Prostate gland (tissue), 2 donors: ENCODE measurements at regions of chr7 and their contacts with region 1.

Region 1: GRCh38 chr7:40329601-40330153 is 194.9 kb downstream of the SUGCT start:
- DNase-seq: no peak
- H3K4me3 ChIP-seq: no peak overlapping the region
- H3K27ac ChIP-seq: no peak overlapping the region
- H3K4me1 ChIP-seq: no peaks in the 10 kb centered on the region
- H3K27me3 ChIP-seq: no peaks in the 10 kb centered on the region
- CTCF ChIP-seq: peak; percentile 45 to 73 (median 66)
- POLR2A ChIP-seq: no peak

Region 2: DNA sequence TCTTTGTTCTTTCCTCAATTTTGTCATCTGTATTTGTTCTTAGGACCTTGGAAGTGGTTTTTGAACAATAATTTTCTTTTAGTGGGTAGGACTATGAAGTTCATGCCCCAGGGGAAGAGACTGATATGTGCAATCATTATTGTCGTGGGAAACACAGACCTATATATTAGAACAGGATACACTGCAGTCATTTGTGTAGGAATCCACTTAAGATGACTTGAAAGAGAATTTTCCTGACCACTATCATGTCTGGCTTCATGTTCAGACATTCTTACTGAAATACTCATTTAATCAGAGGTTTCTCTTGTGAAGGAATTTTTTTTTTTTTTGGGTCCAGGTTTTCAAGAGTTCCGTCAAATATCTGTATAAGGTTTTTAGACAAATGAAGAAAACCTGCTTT is 31.3 kb before region 1 on chr7:
- intact Hi-C with region 1: no loop called
- DNase-seq: no peak
- H3K4me3 ChIP-seq: no peak overlapping the region
- H3K27ac ChIP-seq: no peak overlapping the region
- H3K4me1 ChIP-seq: no peaks in the 10 kb centered on the region
- H3K27me3 ChIP-seq: no peaks in the 10 kb centered on the region
- CTCF ChIP-seq: no peak
- POLR2A ChIP-seq: no peak

Region 3: GRCh38 chr7:40604601-40605438 is 275.1 kb after region 1 on chr7:
- intact Hi-C with region 1: loop called (anchors 5 kb)
- DNase-seq: no peak
- H3K4me3 ChIP-seq: no peak overlapping the region
- H3K27ac ChIP-seq: no peak overlapping the region
- H3K4me1 ChIP-seq: no peaks in the 10 kb centered on the region
- H3K27me3 ChIP-seq: no peaks in the 10 kb centered on the region
- CTCF ChIP-seq: peak in 2 of 4 experiments; percentile 33 to 43
- POLR2A ChIP-seq: no peak

Region 4: GRCh38 chr7:41731492-41732435 is 1402.1 kb after region 1 on chr7:
- intact Hi-C with region 1: loop called (anchors 10 kb)
- DNase-seq: no peak
- H3K4me3 ChIP-seq: no peak overlapping the region
- H3K27ac ChIP-seq: no peak overlapping the region
- H3K4me1 ChIP-seq: no peaks in the 10 kb centered on the region
- H3K27me3 ChIP-seq: no peaks in the 10 kb centered on the region
- CTCF ChIP-seq: peak in 2 of 4 experiments; percentile 49
- POLR2A ChIP-seq: no peak